ENCODE measurements at regions of chr17 and their contacts with region 1.

Region 1: DNA sequence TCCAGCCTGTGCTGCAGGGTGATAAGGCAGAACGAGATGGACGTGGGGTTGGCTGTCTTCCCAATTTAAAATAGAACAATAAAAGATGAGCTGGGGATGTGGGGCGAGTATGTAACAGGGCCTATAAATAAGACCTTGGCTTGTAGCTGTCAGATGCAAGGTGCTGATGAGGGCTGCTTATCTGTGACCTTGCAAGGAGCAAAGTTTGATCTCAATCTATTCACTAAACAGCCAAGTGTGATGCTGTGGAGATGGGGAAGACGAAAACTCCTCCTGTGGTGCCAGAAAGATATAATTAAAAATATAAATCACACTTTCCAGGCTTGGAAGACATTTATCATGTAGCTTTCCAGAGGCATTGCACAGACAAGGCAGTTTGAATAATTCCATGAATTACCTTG is 26.7 kb upstream of the TEX2 start:
- DNase-seq: no peak

Region 2: GRCh38 chr17:64357191-64357981 is 67.6 kb after region 1 on chr17:
- intact Hi-C with region 1: no loop called
- DNase-seq: peak; percentile 87

Region 3: GRCh38 chr17:64615028-64615677 is 325.4 kb after region 1 on chr17:
- intact Hi-C with region 1: loop called in 1 of 2 experiments (anchors 5 kb)
- DNase-seq: no peak

Measured in posterior vena cava (tissue), 2 donors.